Activated CD8-positive, alpha-beta T cell treated with anti-CD3 and anti-CD28 coated beads for 36 hours (primary cell): ENCODE measurements at regions of chr4 and their contacts with region 1.

Region 1: DNA sequence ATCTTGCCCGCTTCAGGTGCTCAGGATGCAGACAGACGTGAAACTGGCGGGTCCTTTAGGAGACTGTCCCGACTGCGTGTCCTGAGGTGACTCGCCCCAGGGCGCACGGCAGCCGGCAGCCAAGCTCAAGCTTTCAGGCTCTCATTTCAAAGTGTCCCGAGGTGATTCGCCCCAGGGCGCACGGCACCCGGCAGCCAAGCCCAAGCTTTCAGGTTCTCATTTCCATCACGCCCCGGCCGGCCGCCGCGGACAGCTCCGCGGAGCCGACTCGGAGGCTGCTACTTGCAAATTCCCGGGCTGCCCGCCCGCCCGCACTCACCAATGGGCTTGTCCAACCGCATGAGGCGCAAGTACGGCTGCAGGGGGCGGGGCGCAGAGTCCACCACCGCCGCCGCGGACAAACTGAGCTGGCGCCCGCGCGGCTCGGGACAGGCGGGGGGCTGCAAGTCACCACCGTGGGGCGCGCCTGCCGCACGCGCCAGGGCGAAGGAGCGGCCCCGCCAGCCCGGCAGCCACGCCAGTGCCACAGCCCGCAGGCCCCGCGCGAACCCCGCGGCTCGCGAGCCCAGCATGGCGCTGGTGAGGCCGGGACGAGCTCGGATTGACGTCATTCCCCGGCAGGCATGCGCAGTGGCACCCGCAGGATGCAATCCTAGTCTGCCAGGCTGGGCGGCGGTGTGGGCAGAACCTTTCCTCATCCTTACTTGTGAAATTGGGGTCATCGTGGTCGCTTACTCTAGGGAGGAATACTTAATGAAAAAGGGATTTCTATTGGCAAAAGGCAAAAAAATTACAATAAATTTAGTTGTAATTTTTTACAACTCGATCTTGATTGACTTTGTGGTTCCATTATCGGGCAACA is at the start of gene COQ2:
- DNase-seq: peak; percentile 95
- ATAC-seq: peak; percentile 91
- H3K4me3 Mint-ChIP-seq: peak within 1 kb of the TSS; percentile 87
- H3K27ac Mint-ChIP-seq: peak within 1 kb of the TSS; percentile 99
- H3K4me1 Mint-ChIP-seq: peaks cover 43% of the 10 kb centered on the region
- H3K27me3 Mint-ChIP-seq: no peaks in the 10 kb centered on the region
- CTCF ChIP-seq: peak; percentile 12
- total RNA-seq, gene COQ2: 18.3 to 20.3 TPM

Region 2: GRCh38 chr4:82706349-82707000 is 577.9 kb before region 1 on chr4:
- CTCF ChIA-PET with region 1: no interaction called
- POLR2A ChIA-PET with region 1: no interaction called
- intact Hi-C with region 1: no loop called
- DNase-seq: no peak
- ATAC-seq: no peak
- H3K4me3 Mint-ChIP-seq: no peak overlapping the region
- H3K27ac Mint-ChIP-seq: no peak overlapping the region
- H3K4me1 Mint-ChIP-seq: no peaks in the 10 kb centered on the region
- H3K27me3 Mint-ChIP-seq: no peaks in the 10 kb centered on the region
- CTCF ChIP-seq: no peak

Region 3: DNA sequence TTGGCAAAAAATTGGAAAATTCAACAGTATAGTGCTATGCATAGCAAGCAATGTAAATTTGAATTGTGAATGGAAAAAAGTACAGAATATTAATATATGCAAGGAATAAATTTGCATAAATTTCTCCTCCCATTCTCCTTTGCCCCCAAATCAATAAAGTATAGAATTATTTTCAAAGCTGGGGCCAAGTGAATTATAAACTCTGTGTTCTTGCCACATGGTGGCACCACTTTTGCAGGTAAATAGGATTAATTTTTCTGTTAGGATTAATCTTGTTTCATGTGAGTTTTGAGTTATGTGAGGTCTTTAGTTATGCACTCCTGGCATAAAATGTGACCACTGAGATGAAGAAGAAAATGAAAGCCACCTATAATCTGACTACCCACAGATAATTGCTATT is 229.5 kb before region 1 on chr4:
- CTCF ChIA-PET with region 1: interaction called, 11 read pairs
- POLR2A ChIA-PET with region 1: interaction called, 3 read pairs
- intact Hi-C with region 1: no loop called
- DNase-seq: peak; percentile 26
- ATAC-seq: no peak
- H3K4me3 Mint-ChIP-seq: no peak overlapping the region
- H3K27ac Mint-ChIP-seq: no peak overlapping the region
- H3K4me1 Mint-ChIP-seq: no peaks in the 10 kb centered on the region
- H3K27me3 Mint-ChIP-seq: no peaks in the 10 kb centered on the region
- CTCF ChIP-seq: peak; percentile 43

Region 4: GRCh38 chr4:83252782-83253405 is 31.5 kb before region 1 on chr4:
- CTCF ChIA-PET with region 1: interaction called, 11 read pairs
- POLR2A ChIA-PET with region 1: no interaction called
- intact Hi-C with region 1: no loop called
- DNase-seq: peak; percentile 84
- ATAC-seq: peak; percentile 88
- H3K4me3 Mint-ChIP-seq: no peak overlapping the region
- H3K27ac Mint-ChIP-seq: no peak overlapping the region
- H3K4me1 Mint-ChIP-seq: peaks cover 21% of the 10 kb centered on the region
- H3K27me3 Mint-ChIP-seq: no peaks in the 10 kb centered on the region
- CTCF ChIP-seq: peak; percentile 90

Region 5: GRCh38 chr4:83267121-83267829 is 17.1 kb before region 1 on chr4:
- CTCF ChIA-PET with region 1: interaction called, 17 read pairs
- POLR2A ChIA-PET with region 1: no interaction called
- intact Hi-C with region 1: no loop called
- DNase-seq: no peak
- ATAC-seq: no peak
- H3K4me3 Mint-ChIP-seq: no peak overlapping the region
- H3K27ac Mint-ChIP-seq: no peak overlapping the region
- H3K4me1 Mint-ChIP-seq: peaks cover 11% of the 10 kb centered on the region
- H3K27me3 Mint-ChIP-seq: no peaks in the 10 kb centered on the region
- CTCF ChIP-seq: no peak

Region 6: DNA sequence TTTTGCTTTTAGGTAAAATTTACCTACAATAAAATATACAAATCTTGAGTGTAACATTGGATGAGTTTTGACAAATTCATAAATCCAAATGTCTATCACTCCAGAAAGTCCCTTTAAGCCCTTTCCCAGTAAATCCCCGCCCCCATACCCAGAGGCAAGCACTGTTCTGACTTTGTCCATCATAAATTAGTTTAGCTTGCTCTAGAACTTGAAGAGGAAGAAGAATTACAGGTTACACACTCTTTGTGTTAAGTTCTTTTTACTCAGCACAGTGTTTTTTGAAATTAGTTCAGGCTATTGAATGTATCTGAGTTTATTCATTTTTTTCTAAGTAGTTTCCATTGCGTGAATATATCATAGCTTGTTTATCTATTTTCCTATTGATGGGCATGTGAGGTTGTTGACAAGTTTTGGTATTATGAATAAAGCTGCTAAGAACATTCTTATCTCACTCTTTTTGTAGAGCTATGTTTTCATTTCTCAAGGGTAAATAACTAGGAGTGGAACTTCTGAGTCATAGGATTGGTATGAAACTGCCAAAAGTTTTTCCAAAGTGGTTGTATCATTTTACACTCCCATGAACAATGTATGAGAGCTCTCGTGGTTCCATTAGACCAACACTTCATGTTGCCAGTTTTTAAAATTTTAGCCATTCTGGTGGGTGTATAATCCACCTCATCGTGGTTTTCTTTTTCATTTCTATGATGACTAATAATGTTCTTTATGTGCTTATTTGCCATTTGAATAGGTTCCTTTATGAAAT is 72.7 kb after region 1 on chr4:
- CTCF ChIA-PET with region 1: interaction called, 15 read pairs
- POLR2A ChIA-PET with region 1: interaction called, 4 read pairs
- intact Hi-C with region 1: no loop called
- DNase-seq: peak; percentile 23
- ATAC-seq: peak; percentile 91
- H3K4me3 Mint-ChIP-seq: no peak overlapping the region
- H3K27ac Mint-ChIP-seq: peak overlapping the region; percentile 78
- H3K4me1 Mint-ChIP-seq: peaks cover 22% of the 10 kb centered on the region
- H3K27me3 Mint-ChIP-seq: no peaks in the 10 kb centered on the region
- CTCF ChIP-seq: no peak

Region 7: GRCh38 chr4:83455281-83456129 is 171.1 kb after region 1 on chr4 and contains the starts of genes HELQ and MRPS18C:
- CTCF ChIA-PET with region 1: interaction called, 8 read pairs
- POLR2A ChIA-PET with region 1: no interaction called
- intact Hi-C with region 1: loop called (anchors 5 kb)
- DNase-seq: peak; percentile 99
- ATAC-seq: peak; percentile 93
- H3K4me3 Mint-ChIP-seq: peak within 1 kb of the TSS; percentile 100
- H3K27ac Mint-ChIP-seq: peak within 1 kb of the TSS; percentile 100
- H3K4me1 Mint-ChIP-seq: peaks cover 47% of the 10 kb centered on the region
- H3K27me3 Mint-ChIP-seq: no peaks in the 10 kb centered on the region
- CTCF ChIP-seq: no peak
- total RNA-seq, gene HELQ: 9.3 to 10.4 TPM
- total RNA-seq, gene MRPS18C: 62.7 to 64.0 TPM